Activated naive CD4-positive, alpha-beta T cell treated with anti-CD3 and anti-CD28 coated beads, Interleukin-2, amount 10 ng/mL, durations not matched to agents 7 days and 5 days (primary cell): ENCODE measurements at regions of chr17 and their contacts with region 1.

Region 1: DNA sequence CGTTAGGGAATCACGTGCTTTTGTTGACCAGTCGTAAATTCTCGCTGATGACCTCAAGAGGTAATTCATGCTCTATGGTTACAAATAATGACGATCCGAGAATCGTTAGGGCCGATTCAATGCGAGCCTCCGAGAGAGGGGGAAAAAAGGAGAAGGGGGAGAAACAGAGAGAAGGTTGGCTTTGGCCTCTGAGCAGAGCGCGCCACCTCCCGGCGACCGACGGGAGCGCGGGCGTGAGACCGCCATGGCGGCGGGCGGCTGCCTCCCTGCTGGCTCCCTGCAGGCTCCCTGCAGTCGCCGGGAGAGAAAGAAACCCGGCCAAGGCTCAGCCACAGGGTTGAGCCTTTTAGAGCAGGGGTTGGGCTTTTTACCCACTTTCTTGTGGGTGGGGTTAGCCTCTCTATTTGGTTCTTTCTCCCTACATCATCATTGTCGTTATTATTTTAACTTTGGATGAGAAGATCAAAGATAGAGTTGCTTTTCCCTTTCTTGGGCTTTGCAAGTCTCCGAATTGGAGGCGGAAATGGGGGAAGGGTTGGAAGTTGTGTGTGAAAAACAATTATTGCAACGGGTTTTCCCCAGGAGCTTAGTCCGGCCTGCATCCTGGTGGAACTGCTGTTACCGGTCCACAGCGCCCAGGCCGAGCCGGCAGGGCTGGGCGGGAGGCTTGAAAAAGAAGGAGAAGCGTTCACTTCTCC is 410 bp upstream of the HOXB5 start:
- DNase-seq: peak; percentile 84
- H3K4me3 Mint-ChIP-seq: peak overlapping the region; percentile 72
- H3K27ac Mint-ChIP-seq: no peak overlapping the region
- H3K4me1 Mint-ChIP-seq: peaks cover 54% of the 10 kb centered on the region
- H3K27me3 Mint-ChIP-seq: peaks cover 100% of the 10 kb centered on the region

Region 2: GRCh38 chr17:48081858-48082257 is 512.1 kb before region 1 on chr17:
- CTCF ChIA-PET with region 1: interaction called, 13 read pairs
- DNase-seq: no peak
- H3K4me3 Mint-ChIP-seq: no peak overlapping the region
- H3K27ac Mint-ChIP-seq: no peak overlapping the region
- H3K4me1 Mint-ChIP-seq: peaks cover 13% of the 10 kb centered on the region
- H3K27me3 Mint-ChIP-seq: no peaks in the 10 kb centered on the region

Region 3: GRCh38 chr17:48307814-48308411 is 286.1 kb before region 1 on chr17:
- CTCF ChIA-PET with region 1: interaction called, 21 read pairs
- DNase-seq: peak; percentile 66
- H3K4me3 Mint-ChIP-seq: no peak overlapping the region
- H3K27ac Mint-ChIP-seq: no peak overlapping the region
- H3K4me1 Mint-ChIP-seq: peaks cover 2% of the 10 kb centered on the region
- H3K27me3 Mint-ChIP-seq: no peaks in the 10 kb centered on the region

Region 4: DNA sequence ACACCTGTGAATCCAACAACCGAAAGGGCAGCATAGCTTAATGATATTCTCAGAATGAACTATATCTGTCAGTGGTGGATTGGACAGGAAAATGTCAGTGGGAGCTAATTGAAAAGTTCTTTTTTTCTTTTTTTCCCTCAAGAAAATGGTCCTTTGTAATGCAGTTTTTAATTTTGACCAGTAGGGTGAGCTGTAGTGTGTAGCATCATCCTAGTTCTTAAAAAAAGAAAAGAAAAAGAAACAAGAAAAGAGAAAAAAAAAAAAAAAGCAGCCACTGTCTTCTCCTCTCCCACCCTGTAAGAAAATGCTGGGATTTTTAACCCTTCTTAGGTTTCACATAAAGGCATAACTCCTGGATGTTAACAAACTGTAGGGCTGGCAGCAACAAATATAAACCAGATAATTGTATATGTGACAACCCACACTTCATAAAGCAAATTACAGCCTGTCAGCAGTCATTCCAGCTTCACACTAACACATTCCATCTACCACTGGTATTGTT is 242.1 kb before region 1 on chr17:
- CTCF ChIA-PET with region 1: interaction called, 30 read pairs
- DNase-seq: no peak
- H3K4me3 Mint-ChIP-seq: no peak overlapping the region
- H3K27ac Mint-ChIP-seq: no peak overlapping the region
- H3K4me1 Mint-ChIP-seq: peaks cover 6% of the 10 kb centered on the region
- H3K27me3 Mint-ChIP-seq: no peaks in the 10 kb centered on the region

Region 5: DNA sequence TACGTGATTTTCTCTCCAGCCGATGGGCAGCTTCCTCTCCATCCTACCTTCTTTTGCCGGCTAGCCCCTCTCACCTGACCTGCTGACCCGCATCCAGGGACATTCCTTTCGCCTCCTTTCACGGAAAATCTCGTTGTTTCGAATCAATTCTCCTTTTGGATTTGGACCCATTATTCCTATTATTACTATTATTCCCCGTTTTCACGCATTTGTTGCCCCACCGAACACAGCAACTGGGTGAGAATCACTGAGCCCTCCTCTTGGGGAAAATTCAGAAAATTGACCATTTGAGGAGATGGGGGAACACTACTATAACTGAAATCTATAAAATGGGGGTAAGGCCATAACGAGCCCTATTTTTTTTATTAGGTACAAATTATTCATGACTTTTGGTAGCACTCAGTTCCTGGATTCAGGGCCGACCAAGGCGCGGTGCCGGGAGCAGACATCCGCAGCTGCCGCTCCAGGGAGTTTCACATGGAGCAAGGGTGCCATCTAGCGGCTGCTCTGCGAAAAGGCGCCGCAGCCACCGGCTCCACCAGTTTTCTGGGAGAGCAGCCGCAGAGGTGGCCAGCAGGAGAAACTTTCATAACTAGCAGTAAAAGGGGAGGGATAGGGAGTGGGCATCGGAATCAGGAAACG is 24.4 kb after region 1 on chr17:
- CTCF ChIA-PET with region 1: interaction called, 21 read pairs
- DNase-seq: peak; percentile 87
- H3K4me3 Mint-ChIP-seq: peak overlapping the region; percentile 41
- H3K27ac Mint-ChIP-seq: peak overlapping the region; percentile 80
- H3K4me1 Mint-ChIP-seq: peaks cover 35% of the 10 kb centered on the region
- H3K27me3 Mint-ChIP-seq: peaks cover 100% of the 10 kb centered on the region